Activated CD4-positive, alpha-beta T cell treated with anti-CD3 and anti-CD28 coated beads, Interleukin-2, amount 10 ng/mL, durations not matched to agents 24 days and 14 days (primary cell): ENCODE measurements at regions of chr2 and their contacts with region 1.

Region 1: GRCh38 chr2:17309741-17310339 is 208.4 kb downstream of the RAD51AP2 start:
- DNase-seq: peak; percentile 57
- H3K4me3 Mint-ChIP-seq: no peak overlapping the region
- H3K27ac Mint-ChIP-seq: no peak overlapping the region
- H3K4me1 Mint-ChIP-seq: peaks cover 6% of the 10 kb centered on the region
- H3K27me3 Mint-ChIP-seq: peaks cover 12% of the 10 kb centered on the region

Region 2: GRCh38 chr2:16773080-16773713 is 536.6 kb before region 1 on chr2:
- intact Hi-C with region 1: loop called (anchors 5 kb)
- DNase-seq: no peak
- H3K4me3 Mint-ChIP-seq: no peak overlapping the region
- H3K27ac Mint-ChIP-seq: no peak overlapping the region
- H3K4me1 Mint-ChIP-seq: no peaks in the 10 kb centered on the region
- H3K27me3 Mint-ChIP-seq: peaks cover 8% of the 10 kb centered on the region

Region 3: GRCh38 chr2:17030047-17030446 is 279.8 kb before region 1 on chr2:
- intact Hi-C with region 1: no loop called
- DNase-seq: no peak
- H3K4me3 Mint-ChIP-seq: no peak overlapping the region
- H3K27ac Mint-ChIP-seq: no peak overlapping the region
- H3K4me1 Mint-ChIP-seq: no peaks in the 10 kb centered on the region
- H3K27me3 Mint-ChIP-seq: no peaks in the 10 kb centered on the region